Tibial artery (tissue), 4 donors: ENCODE measurements at regions of chr6 and their contacts with region 1.

Region 1: DNA sequence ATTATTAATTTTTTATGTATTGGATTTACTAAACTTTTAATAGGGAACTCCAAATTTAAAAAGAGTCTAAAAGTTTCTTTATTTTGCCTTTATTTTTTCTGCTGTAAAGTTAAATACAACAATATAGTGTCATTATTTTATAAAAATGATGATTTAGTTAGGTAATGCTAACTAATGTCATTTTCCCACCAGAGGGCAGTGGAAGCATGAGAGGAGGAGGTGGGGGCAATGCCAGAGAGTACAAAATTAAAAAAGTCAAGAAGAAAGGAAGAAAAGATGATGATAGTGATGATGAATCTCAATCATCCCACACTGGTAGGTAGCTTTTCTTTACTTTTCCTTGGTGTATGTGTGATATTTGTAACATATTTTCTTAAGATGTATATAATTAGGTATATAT is 20.2 kb upstream of the FHL5 start:
- DNase-seq: no peak
- H3K4me3 ChIP-seq: no peak overlapping the region
- H3K27ac ChIP-seq: no peak overlapping the region
- H3K4me1 ChIP-seq: peaks cover 0 to 7% (median 0%) of the 10 kb centered on the region in 4 donors
- H3K27me3 ChIP-seq: no peaks in the 10 kb centered on the region
- CTCF ChIP-seq: peak; percentile 58 to 67

Region 2: GRCh38 chr6:96015518-96016333 is 527.0 kb before region 1 on chr6 and contains the start of gene FUT9:
- intact Hi-C with region 1: no loop called
- DNase-seq: no peak
- H3K4me3 ChIP-seq: peak within 1 kb of the TSS in 1 of 2 donors; percentile 25
- H3K27ac ChIP-seq: no peak within 1 kb of the TSS
- H3K4me1 ChIP-seq: peaks cover 0 to 17% (median 7%) of the 10 kb centered on the region in 4 donors
- H3K27me3 ChIP-seq: peaks cover 0 to 16% of the 10 kb centered on the region in 2 donors
- CTCF ChIP-seq: no peak

Region 3: GRCh38 chr6:96086745-96087144 is 456.0 kb before region 1 on chr6:
- intact Hi-C with region 1: no loop called
- DNase-seq: no peak
- H3K4me3 ChIP-seq: no peak overlapping the region
- H3K27ac ChIP-seq: no peak overlapping the region
- H3K4me1 ChIP-seq: no peaks in the 10 kb centered on the region
- H3K27me3 ChIP-seq: no peaks in the 10 kb centered on the region
- CTCF ChIP-seq: no peak

Region 4: GRCh38 chr6:96522465-96523009 is 20.2 kb before region 1 on chr6:
- intact Hi-C with region 1: no loop called
- DNase-seq: no peak
- H3K4me3 ChIP-seq: peak overlapping the region; percentile 60 to 71
- H3K27ac ChIP-seq: peak overlapping the region; percentile 85 to 92
- H3K4me1 ChIP-seq: peaks cover 0 to 26% (median 16%) of the 10 kb centered on the region in 4 donors
- H3K27me3 ChIP-seq: no peaks in the 10 kb centered on the region
- CTCF ChIP-seq: no peak

Region 5: DNA sequence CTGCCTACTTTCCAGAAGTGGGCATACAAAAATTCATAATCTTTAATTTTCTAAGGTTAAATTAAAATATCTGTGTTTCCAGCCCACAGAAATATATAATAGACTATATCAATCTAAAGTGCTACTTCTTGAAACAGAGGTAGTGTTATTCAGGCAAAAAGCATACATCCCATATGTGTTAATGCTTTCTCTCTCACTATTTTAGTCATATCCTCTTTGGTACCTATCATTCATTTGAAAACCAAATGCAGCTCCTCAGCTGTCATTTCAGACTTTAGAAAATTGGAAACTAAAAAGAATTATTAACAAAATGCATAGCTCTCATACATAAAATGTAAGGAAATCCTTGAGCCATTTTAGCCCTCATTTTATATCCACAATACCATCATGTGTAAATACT is 21.2 kb after region 1 on chr6:
- intact Hi-C with region 1: no loop called
- DNase-seq: no peak
- H3K4me3 ChIP-seq: peak overlapping the region; percentile 61 to 63
- H3K27ac ChIP-seq: peak overlapping the region; percentile 76 to 77
- H3K4me1 ChIP-seq: peaks cover 0 to 5% (median 0%) of the 10 kb centered on the region in 4 donors
- H3K27me3 ChIP-seq: no peaks in the 10 kb centered on the region
- CTCF ChIP-seq: no peak

Region 6: GRCh38 chr6:96613291-96613999 is 70.7 kb after region 1 on chr6:
- intact Hi-C with region 1: loop called (anchors 2 kb)
- DNase-seq: no peak
- H3K4me3 ChIP-seq: no peak overlapping the region
- H3K27ac ChIP-seq: peak overlapping the region; percentile 13 to 83
- H3K4me1 ChIP-seq: peaks cover 0 to 77% (median 19%) of the 10 kb centered on the region in 4 donors
- H3K27me3 ChIP-seq: no peaks in the 10 kb centered on the region
- CTCF ChIP-seq: no peak

Region 7: GRCh38 chr6:96760153-96760687 is 217.5 kb after region 1 on chr6:
- intact Hi-C with region 1: loop called (anchors 10 kb)
- DNase-seq: no peak
- H3K4me3 ChIP-seq: no peak overlapping the region
- H3K27ac ChIP-seq: no peak overlapping the region
- H3K4me1 ChIP-seq: peaks cover 0 to 13% (median 0%) of the 10 kb centered on the region in 4 donors
- H3K27me3 ChIP-seq: no peaks in the 10 kb centered on the region
- CTCF ChIP-seq: peak; percentile 29 to 34